Head of caudate nucleus (tissue), 42 donors: ENCODE measurements at regions of chr4 and their contacts with region 1.

Region 1: DNA sequence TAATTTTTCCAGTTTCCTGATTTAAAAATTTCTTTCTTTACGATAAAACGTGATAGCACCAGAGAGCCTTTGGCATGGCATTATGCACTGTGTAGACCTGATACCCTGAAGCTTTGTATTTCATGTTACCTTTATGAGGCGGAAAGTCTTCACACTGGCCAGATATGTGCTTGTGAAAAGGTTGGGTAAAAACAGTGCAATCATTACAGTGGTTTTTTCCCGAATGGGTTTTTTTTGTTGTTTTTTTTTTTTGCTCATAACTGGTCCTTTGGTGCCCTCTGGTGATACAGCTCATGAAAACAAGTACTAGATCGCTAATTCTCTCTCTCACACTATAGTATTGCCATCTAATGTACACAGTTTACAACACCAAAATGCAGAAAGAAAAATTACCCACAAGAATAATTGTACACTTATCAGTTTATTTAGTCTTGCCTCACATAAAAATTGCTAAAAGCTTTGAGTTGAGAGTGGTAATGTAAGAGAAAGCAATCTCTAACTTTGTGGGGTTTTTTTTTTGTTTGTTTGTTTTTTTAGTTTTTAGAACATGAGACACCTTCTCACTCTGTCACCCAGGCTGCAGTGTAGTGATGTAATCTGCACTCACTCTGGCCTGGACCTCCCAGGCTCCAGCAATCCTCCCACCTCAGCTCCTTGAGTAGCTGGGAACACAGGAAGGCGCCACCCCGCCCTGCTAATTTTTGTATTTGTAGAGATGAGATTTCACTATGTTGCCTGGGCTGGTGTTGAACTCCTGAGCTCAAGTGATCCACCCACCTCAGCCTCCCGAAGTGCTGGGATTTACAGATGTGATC is 21.3 kb downstream of the SPCS3 start:
- DNase-seq: peak in 4 of 42 donors; percentile 24 to 64 (median 49)

Region 2: DNA sequence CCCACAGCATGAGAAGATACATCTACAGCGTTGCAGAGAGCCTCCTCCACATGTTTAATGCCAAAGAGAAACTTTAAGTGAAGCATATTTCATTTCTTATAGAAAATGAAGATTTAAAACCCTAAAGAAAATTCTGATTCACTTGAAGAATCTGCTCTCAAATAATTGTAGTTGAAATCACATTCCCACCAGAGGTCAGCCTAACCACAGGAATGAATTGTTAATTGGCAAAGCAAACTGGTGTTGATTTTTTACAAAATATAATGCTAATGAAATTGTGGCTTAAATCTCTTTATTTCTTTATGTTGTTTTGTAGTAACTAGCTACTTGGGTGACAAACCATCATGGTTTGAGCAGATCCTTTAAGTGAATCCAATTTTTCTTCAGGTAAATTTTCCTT is 306.6 kb before region 1 on chr4:
- intact Hi-C with region 1: loop called (anchors 5 kb)
- DNase-seq: peak in 17 of 42 donors; percentile 16 to 80 (median 55)

Region 3: DNA sequence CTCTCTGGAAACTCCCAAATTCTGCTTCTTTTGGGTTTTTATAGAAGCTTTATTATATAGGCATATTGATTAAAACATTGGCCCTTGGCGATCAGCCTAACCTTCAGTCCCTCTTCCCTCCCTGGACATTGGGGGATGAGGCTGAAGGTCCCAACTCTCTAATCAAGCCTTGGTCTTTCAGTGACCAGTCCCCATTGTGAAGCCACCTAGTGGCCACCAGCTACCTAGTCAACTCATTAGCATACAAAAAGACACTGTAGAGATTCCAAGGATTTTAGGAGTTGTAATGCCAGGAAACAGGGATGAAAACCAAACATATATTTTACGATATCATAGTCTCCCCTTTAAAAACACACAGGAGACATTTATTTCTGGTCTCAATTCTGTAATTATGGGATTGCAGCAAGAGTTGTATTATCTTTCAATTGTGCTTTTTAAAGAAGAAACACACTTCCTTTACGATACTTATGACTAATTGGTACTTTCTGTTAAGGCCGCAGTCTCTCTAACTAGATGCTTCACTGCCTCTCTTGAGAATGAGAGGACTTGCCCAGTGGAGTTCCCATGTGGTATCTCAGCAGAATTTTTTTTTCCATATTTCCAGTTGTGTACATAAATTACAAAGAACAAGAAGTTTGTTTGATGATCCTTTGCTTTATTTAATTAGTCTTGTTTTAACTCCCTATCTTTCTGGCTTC is 217.2 kb before region 1 on chr4:
- intact Hi-C with region 1: no loop called
- DNase-seq: peak in 27 of 42 donors; percentile 5 to 70 (median 22)

Region 4: GRCh38 chr4:176226736-176227135 is 114.3 kb before region 1 on chr4:
- intact Hi-C with region 1: no loop called
- DNase-seq: no peak